ENCODE measurements at regions of chr10 and their contacts with region 1.

Region 1: DNA sequence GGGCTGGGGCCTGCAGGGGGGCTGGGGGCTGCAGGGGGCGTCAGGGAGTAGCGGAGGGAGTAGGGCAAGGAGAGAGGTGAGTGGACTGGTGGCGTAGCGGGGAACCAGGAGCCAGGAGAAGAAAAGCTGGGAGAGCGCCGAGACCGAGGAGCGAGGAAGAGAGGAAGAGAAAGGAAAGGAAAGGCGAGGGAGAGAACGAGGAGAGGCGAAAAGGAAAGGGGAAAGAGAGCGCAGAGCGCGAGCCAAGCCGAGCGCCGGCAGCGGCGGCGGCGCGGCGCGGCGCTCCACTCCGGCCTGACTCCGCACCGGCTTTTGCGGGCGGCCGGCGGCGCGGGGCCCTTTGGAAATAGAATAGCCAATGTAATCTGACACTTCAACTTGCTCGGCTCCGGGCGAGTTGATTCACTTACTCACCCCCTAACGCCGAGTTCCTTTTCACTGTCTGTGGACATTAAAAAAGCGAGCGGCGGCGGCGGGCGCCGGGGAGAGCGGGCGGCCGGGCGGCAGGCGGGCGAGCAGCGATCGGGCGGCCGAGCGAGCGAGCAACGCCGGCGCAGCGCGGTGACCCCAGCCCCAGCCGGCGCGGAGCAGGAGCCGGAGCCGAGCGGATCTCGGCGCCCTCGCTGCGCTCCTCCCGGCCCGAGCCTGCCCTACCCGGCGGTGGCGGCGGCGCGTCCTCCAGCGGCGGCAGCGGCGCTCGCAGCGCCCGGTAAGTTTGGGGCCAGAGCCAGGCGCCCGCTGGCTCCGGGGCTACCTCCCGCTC is at the start of gene ZMIZ1:
- DNase-seq: peak; percentile 73 to 92 (median 86)
- H3K4me3 ChIP-seq: peak within 1 kb of the TSS; percentile 60 to 94 (median 81)
- H3K27ac ChIP-seq: peak within 1 kb of the TSS; percentile 53 to 99 (median 93)
- H3K27me3 ChIP-seq: no peaks in the 10 kb centered on the region
- CTCF ChIP-seq: peak in 29 of 56 donors; percentile 2 to 52 (median 17)
- total RNA-seq, gene ZMIZ1: 67.5 to 153 (median 96.5) TPM

Region 2: DNA sequence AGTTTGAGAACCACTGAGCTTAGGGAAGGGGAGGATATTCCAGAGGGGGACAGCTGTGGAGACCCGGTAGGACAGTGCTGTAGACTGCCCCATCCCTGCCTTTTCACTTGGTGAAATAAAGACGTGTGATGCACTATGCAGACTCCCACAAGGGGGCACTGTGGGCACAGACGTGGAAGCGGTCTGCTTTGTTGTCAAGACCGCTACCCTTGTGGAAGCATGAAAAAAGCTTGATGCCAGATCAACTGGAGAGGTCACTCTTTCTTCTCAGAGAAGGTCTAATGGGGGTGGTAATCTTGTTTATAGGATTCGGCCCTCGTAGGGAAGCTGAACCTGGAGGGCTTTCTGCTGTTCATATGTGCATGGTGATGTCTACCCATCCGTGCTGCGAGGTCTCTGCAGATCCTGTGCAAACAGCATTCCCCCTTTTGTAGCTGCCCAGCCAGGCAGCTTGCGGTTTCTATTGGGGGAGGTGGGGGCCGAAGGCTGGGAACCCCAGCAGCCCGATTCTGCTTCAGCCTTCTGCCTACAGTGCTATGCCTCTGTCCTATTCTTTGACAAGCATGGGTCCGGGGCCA is 1021.3 kb before region 1 on chr10:
- intact Hi-C with region 1: loop called (anchors 5 to 10 kb)
- DNase-seq: peak; percentile 88 to 98 (median 92)
- H3K4me3 ChIP-seq: peak overlapping the region in 17 of 59 donors; percentile 10 to 32 (median 22)
- H3K27ac ChIP-seq: peak overlapping the region in 12 of 59 donors; percentile 19 to 66 (median 42)
- H3K27me3 ChIP-seq: no peaks in the 10 kb centered on the region
- CTCF ChIP-seq: peak; percentile 88 to 99 (median 94)

Region 3: DNA sequence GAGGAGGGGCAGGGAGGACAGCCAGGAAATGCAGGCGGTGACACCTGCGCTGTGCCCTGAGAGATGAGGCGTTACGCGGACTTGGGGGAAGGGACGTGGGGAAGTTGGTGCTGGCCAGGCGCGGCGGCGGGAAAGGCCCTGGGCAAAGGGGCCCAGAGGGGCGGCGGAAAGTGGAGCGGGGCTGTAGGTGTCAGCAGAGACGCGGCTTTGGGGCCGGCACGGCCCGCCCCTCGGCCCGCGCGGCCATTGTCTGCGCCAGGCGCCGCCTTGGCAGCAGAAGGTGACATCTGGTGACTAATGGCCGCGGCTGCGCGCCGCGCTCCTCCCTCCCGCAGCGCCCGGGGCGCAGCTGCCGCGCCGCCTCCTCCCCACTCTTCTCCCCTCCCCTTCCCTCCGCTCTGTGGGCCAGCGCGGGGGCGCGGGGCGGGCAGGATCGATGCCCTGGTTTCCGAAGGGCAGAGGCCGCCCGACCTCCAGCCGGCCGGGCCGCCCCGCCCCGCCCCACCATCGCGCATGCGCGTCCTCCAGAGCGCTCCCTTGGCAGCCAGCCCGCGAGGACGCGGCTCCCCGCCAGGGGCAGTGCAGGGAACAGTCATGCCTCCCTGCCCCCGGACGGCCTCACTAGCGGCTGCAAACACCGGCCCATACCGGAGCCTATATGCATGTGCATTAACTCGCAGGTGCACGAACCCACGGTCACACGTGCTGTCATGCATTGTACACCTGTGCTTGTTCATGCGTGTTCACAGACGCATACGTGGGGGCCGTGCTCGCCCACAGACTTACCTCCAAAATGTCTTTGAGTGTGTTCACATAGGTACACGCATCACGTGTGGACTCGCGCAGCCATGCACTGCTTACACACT is 765.5 kb before region 1 on chr10:
- intact Hi-C with region 1: loop called (anchors 2 kb)
- DNase-seq: peak; percentile 79 to 95 (median 90)
- H3K4me3 ChIP-seq: peak overlapping the region; percentile 36 to 78 (median 65)
- H3K27ac ChIP-seq: peak overlapping the region; percentile 70 to 99 (median 96)
- H3K27me3 ChIP-seq: no peaks in the 10 kb centered on the region
- CTCF ChIP-seq: peak; percentile 14 to 73 (median 57)

Region 4: GRCh38 chr10:78688901-78689583 is 379.7 kb before region 1 on chr10:
- intact Hi-C with region 1: loop called in 1 of 2 experiments (anchors 10 kb)
- DNase-seq: peak; percentile 22 to 81 (median 69)
- H3K4me3 ChIP-seq: peak overlapping the region in 37 of 59 donors; percentile 10 to 55 (median 28)
- H3K27ac ChIP-seq: peak overlapping the region in 58 of 59 donors; percentile 31 to 92 (median 82)
- H3K27me3 ChIP-seq: no peaks in the 10 kb centered on the region
- CTCF ChIP-seq: no peak

Region 5: DNA sequence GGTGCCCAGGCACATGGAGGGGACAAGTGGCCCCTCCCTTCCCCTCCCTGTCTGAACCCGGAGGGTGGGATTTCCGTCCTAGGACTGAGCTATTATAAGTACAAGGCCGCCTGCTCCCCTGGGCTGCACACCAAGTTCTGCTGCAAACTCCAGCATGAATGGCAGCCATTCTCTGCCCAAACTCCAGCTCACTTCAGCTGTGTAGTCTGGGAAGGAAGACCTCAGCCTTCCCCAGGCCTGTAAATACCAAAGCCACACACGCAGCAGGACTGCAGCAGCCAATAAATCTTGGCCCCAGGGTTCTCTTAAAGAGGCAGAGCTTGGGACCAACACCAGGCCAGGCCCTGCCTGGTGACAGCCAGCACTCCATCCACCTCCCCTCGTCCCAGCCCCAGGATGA is 291.3 kb before region 1 on chr10:
- intact Hi-C with region 1: loop called in 1 of 2 experiments (anchors 10 kb)
- DNase-seq: peak; percentile 19 to 89 (median 80)
- H3K4me3 ChIP-seq: no peak overlapping the region
- H3K27ac ChIP-seq: peak overlapping the region in 57 of 59 donors; percentile 3 to 92 (median 73)
- H3K27me3 ChIP-seq: no peaks in the 10 kb centered on the region
- CTCF ChIP-seq: peak in 13 of 56 donors; percentile 6 to 43 (median 11)

Region 6: DNA sequence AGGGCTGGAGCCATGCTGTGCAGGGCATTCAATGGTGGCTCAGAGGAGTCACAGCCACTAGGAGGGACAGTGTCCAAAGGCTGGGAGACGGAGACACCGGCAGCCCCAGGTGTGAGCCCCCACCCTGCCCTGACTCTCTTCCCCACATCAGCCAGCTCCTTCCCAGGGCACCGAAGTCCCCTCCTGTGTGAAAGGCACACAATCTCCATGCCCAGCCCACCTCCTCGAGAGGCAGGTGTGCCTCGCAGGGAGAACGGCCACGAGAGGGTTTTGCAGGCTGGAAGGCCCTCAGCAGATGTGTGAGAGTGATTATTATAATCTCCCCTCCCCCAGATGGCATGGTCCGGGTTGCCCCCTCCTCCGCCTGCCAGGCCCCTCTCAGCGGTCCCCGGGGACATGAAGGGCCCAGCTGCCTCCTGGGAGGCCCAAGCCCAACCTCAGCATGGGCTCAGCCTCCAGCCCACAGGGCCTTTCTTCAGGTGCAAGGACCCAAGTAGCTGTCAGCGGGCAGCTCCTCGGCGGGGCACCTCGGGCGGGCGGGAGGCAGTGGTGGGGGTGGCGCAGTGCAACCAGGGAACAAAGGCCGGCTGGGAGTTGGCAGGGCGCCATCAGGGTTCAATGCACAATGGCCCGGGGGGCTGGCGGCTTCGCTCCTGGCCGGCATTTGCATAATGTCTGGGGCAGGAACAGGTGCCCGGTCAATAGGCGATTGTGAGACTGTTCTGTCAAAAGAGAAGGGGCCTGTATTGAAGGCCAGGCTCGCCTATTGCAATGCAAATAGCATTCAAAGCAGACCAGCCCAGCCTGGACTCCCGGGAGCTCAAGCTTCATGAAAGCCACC is 155.3 kb before region 1 on chr10:
- intact Hi-C with region 1: loop called (anchors 2 to 5 kb)
- DNase-seq: peak; percentile 54 to 98 (median 94)
- H3K4me3 ChIP-seq: no peak overlapping the region
- H3K27ac ChIP-seq: peak overlapping the region in 51 of 59 donors; percentile 1 to 89 (median 70)
- H3K27me3 ChIP-seq: no peaks in the 10 kb centered on the region
- CTCF ChIP-seq: peak in 23 of 56 donors; percentile 5 to 59 (median 23)

Region 7: DNA sequence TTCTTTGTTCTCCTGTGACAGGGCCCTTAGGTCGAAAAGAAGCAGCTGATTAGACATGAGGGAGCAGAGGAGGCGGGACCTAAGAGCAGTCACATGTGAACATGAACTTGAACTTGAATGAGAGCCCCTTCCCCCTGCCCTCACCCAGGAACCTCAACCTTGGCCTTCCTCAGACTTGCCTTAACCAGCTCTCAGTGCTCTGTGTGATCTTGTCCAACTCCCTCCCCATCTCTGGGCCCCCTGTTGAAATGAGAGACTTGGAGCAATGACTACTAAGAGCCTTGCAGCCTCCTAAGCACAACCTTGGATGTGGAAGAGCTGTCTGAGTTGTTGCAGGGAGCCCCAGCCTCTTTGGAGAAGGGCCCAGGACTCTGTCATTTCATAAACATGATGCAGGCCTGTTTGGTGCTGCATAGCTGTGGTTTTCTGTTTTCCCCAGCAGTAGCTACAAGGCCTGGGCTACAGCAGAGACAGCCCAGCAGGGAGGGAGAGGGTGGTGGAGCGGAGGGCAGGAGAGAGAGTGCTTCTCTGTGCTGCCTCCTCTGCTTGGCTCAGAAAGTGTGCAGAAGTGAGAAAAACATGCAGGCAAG is 123.9 kb before region 1 on chr10:
- intact Hi-C with region 1: no loop called
- DNase-seq: peak in 3 of 10 donors; percentile 25 to 52 (median 39)
- H3K4me3 ChIP-seq: no peak overlapping the region
- H3K27ac ChIP-seq: peak overlapping the region in 30 of 59 donors; percentile 4 to 74 (median 44)
- H3K27me3 ChIP-seq: no peaks in the 10 kb centered on the region
- CTCF ChIP-seq: no peak

Region 8: DNA sequence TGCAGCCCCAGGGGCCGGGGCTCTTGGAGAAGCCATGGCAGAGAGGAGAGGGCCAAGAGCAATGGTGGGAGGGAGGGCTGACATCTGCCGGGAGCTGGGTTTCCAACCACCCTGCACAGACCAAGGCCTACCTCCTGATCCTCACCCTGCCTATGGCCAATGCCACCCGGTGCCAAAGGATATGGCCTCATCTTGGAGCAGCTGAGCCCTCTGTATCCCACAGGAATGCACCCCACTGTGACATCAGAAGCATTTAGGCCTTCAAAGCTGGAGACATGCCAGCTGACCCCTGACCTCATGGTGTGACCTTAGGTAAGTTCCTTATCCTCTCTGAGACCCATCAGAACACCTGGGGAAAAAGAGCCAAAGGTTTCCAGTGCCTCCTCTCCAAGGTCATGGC is 113.5 kb before region 1 on chr10:
- intact Hi-C with region 1: no loop called
- DNase-seq: no peak
- H3K4me3 ChIP-seq: no peak overlapping the region
- H3K27ac ChIP-seq: no peak overlapping the region
- H3K27me3 ChIP-seq: no peaks in the 10 kb centered on the region
- CTCF ChIP-seq: no peak

Region 9: GRCh38 chr10:79195091-79195923 is 126.6 kb after region 1 on chr10:
- intact Hi-C with region 1: loop called (anchors 1 to 5 kb)
- DNase-seq: peak; percentile 75 to 91 (median 86)
- H3K4me3 ChIP-seq: peak overlapping the region in 35 of 59 donors; percentile 4 to 53 (median 34)
- H3K27ac ChIP-seq: peak overlapping the region in 43 of 59 donors; percentile 2 to 81 (median 54)
- H3K27me3 ChIP-seq: no peaks in the 10 kb centered on the region
- CTCF ChIP-seq: peak; percentile 92 to 100 (median 98)

Measured in dorsolateral prefrontal cortex (tissue), 120 donors.